Thyroid gland (tissue), 4 donors: ENCODE measurements at regions of chr11 and their contacts with region 1.

Region 1: GRCh38 chr11:86869966-86870570 is 69.7 kb downstream of the PRSS23 start:
- DNase-seq: peak; percentile 63 to 71
- H3K4me3 ChIP-seq: no peak overlapping the region
- H3K27ac ChIP-seq: no peak overlapping the region
- H3K4me1 ChIP-seq: no peaks in the 10 kb centered on the region
- H3K27me3 ChIP-seq: no peaks in the 10 kb centered on the region
- CTCF ChIP-seq: peak; percentile 58 to 86 (median 72)
- POLR2A ChIP-seq: no peak

Region 2: DNA sequence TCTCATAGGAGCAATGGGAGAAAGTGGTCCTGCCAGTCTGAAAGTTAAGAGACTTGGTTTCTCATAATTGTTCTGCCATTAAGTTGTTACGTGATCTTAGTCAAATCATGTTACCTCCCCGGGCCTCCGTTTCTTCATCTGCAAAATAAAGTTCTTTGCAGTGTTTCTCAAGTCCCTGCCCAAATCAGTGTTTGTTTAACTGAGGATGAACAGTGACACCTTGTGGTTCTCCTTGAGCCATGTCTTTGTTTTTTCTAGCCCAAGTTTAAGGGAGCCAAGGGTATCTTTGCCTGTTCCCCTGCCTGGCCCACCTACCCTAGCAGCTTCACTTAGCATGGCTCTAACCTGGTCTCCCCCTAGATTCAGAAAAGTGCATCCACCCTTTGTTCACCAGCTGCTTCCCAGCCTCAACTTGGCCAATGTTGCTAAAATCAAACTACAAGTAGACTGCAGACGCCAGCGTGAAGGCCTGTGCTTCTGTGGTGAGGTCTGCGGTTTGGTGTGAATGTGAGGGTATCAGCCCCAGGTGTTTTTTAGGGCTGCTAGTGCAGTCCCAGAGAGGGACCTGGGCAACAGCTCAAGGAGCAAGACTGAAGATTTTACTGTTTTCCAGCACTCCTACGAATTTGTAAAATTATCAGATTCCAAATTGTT is 49.6 kb after region 1 on chr11:
- intact Hi-C with region 1: loop called (anchors 5 kb)
- DNase-seq: no peak
- H3K4me3 ChIP-seq: no peak overlapping the region
- H3K27ac ChIP-seq: peak overlapping the region in 2 of 3 donors; percentile 1 to 26
- H3K4me1 ChIP-seq: peaks cover 0 to 16% of the 10 kb centered on the region in 2 donors
- H3K27me3 ChIP-seq: no peaks in the 10 kb centered on the region
- CTCF ChIP-seq: peak; percentile 18 to 75 (median 56)
- POLR2A ChIP-seq: no peak

Region 3: GRCh38 chr11:87290304-87290922 is 420.3 kb after region 1 on chr11:
- intact Hi-C with region 1: loop called (anchors 10 kb)
- DNase-seq: no peak
- H3K4me3 ChIP-seq: no peak overlapping the region
- H3K27ac ChIP-seq: no peak overlapping the region
- H3K4me1 ChIP-seq: no peaks in the 10 kb centered on the region
- H3K27me3 ChIP-seq: no peaks in the 10 kb centered on the region
- CTCF ChIP-seq: peak; percentile 22 to 81 (median 48)
- POLR2A ChIP-seq: no peak

Region 4: GRCh38 chr11:87421422-87421821 is 551.4 kb after region 1 on chr11:
- intact Hi-C with region 1: loop called (anchors 10 kb)
- DNase-seq: peak; percentile 5 to 15
- H3K4me3 ChIP-seq: no peak overlapping the region
- H3K27ac ChIP-seq: no peak overlapping the region
- H3K4me1 ChIP-seq: no peaks in the 10 kb centered on the region
- H3K27me3 ChIP-seq: no peaks in the 10 kb centered on the region
- CTCF ChIP-seq: peak; percentile 60 to 82 (median 74)
- POLR2A ChIP-seq: no peak